ENCODE measurements at regions of chr16 and their contacts with region 1.

Region 1: GRCh38 chr16:87316923-87317749 is at the start of gene C16orf95:
- DNase-seq: peak; percentile 98

Region 2: DNA sequence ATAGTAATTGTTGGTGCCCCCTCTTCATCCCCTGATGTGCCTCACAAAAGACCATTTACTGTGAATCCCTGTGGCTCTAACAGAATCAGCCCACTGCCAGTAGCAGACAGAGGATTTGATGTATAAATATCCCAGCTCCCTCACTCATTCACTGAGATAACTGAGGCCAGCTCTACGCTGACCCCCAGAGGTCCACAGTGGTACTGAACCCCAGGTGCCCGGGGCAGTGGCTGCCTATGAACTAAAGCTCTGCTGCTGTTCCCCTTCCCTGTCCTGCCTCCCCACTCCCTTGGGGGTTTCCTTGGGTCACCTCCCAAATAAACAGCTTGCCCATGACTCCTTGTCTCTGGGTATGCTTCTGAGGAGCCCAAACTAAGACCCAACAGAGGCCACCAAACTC is 443.0 kb before region 1 on chr16:
- CTCF ChIA-PET with region 1: no interaction called
- POLR2A ChIA-PET with region 1: no interaction called
- DNase-seq: peak; percentile 65

Region 3: GRCh38 chr16:87303431-87303930 is 13.7 kb before region 1 on chr16:
- CTCF ChIA-PET with region 1: no interaction called
- POLR2A ChIA-PET with region 1: interaction called, 13 read pairs
- DNase-seq: no peak

Region 4: DNA sequence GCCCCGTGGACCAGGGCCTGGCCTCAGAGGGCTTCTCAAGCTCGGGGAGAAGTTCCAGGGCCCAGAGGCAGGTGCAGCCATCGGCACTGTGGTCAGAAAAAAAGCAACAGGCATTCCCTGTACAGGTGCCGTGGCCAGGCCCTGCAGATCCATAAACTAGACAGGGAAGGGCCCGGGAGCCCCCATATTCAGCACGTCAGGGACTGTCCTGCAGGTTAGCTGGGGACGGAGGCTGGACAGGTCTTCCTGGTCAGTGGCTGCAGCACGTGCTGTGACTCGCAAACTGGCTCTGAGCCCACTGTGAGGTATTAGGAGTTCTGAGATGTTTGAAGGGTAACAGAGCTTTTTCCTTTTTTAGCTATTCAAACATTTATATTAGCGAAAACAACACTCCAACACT is 15.0 kb after region 1 on chr16:
- CTCF ChIA-PET with region 1: interaction called, 3 read pairs
- POLR2A ChIA-PET with region 1: interaction called, 12 read pairs
- DNase-seq: no peak

Region 5: DNA sequence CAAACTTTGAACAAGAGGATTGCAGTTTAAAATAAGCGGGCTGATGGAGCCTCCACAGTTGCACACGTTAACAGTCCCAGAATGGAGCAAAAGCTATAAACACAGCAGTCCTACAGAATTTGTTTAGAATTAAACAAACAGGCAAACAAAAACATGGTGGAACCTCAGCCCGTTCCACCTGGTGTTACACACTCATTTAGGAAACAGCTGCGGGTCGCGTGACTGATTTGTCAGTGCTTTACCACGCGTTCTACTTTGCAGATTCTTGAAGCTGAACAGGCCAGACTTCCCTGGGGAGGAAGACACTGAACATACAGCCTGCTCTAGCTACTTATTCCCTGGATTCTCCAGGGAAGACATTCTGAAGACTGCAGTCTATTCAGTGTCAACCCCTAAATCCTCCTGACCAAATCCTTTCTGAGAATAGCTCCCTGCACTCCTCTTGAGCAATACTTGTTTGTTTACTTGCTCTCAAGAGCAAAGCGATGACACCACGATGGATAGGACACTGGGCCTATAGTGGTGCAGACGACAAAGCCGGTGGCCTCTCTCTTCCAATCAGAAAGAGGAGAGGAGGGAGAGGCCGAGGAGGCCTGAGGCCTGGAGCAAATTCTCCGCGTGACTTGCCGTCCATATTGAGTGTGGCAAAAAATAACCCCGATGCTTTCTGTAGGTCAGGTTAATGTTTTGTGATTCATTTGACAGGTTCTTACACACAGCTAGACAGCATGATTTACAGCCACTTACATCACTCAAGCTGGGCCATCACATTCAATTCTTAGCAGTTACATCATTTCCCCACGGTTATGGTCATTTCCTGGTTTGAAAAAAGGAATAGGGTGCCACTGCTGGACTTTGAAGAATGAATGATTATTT is 71.0 kb after region 1 on chr16:
- CTCF ChIA-PET with region 1: interaction called, 3 read pairs
- POLR2A ChIA-PET with region 1: interaction called, 31 read pairs
- DNase-seq: peak; percentile 78